CD4-positive, alpha-beta T cell (primary cell): ENCODE measurements at regions of chr18 and their contacts with region 1.

Region 1: GRCh38 chr18:3062798-3063680 is 50.1 kb upstream of the LPIN2 start:
- DNase-seq: peak; percentile 62 to 87 (median 74)
- ATAC-seq: peak; percentile 35
- H3K4me3 ChIP-seq: peak overlapping the region; percentile 54
- H3K4me3 Mint-ChIP-seq: peak overlapping the region; percentile 43
- H3K27ac ChIP-seq: peak overlapping the region; percentile 95 to 96
- H3K27ac Mint-ChIP-seq: peak overlapping the region; percentile 96
- H3K4me1 ChIP-seq: peaks cover 63% of the 10 kb centered on the region
- H3K4me1 Mint-ChIP-seq: peaks cover 72% of the 10 kb centered on the region
- H3K27me3 ChIP-seq: no peaks in the 10 kb centered on the region
- H3K27me3 Mint-ChIP-seq: no peaks in the 10 kb centered on the region
- CTCF ChIP-seq: peak; percentile 87

Region 2: DNA sequence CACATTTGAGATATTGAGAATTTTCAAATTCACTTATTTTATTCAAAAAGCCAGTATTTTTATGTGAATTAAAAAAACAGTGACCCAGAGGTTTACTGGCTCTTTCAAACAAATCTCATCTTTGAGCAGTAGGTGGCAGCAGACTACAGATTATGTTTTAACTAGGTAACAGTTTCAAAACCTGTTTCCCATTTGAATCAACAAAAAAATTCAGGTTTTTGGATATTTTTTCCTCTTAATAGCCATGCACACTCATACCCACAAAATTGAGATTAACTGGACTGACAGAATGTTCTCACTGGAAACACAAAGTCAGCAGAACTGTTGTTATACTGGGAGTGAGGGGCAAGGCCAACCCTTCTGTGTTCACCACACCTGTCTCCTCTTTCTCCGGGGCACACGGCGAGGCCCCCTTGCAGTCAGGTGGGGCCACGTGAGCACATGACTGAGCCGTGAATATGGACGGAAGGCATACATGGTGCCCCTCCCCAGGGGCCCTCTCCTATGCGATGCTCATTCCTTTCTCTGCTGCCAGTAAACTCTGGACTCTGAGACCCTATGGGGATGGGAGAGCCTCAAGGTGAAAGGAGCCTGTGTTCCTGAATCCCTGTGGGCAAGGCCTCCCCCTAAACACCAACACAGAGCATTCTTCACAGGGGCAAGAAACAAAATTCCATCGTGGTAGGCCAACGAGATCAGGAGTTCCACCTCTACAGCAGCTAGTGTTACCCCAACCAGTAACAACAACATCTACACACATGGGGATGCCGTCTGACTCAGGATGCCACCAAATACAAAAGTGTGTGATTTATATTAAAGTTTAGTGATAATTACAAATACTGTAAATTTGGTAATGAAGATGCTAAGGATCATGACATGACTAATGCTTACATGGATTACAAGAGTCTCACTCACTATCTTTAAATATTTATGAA is 130.5 kb before region 1 on chr18:
- CTCF ChIA-PET with region 1: interaction called, 8 read pairs
- POLR2A ChIA-PET with region 1: interaction called, 6 read pairs
- intact Hi-C with region 1: loop called in 1 of 2 experiments (anchors 5 kb)
- DNase-seq: peak in 8 of 14 experiments; percentile 13 to 84 (median 51)
- ATAC-seq: peak; percentile 80
- H3K4me3 ChIP-seq: no peak overlapping the region
- H3K4me3 Mint-ChIP-seq: no peak overlapping the region
- H3K27ac ChIP-seq: peak overlapping the region; percentile 18 to 51
- H3K27ac Mint-ChIP-seq: peak overlapping the region; percentile 67
- H3K4me1 ChIP-seq: peaks cover 9% of the 10 kb centered on the region
- H3K4me1 Mint-ChIP-seq: peaks cover 36% of the 10 kb centered on the region
- H3K27me3 ChIP-seq: no peaks in the 10 kb centered on the region
- H3K27me3 Mint-ChIP-seq: no peaks in the 10 kb centered on the region
- CTCF ChIP-seq: peak; percentile 92

Region 3: GRCh38 chr18:2971741-2972552 is 91.1 kb before region 1 on chr18:
- CTCF ChIA-PET with region 1: interaction called, 11 read pairs
- POLR2A ChIA-PET with region 1: interaction called, 10 read pairs
- intact Hi-C with region 1: no loop called
- DNase-seq: peak; percentile 42 to 91 (median 62)
- ATAC-seq: peak; percentile 73
- H3K4me3 ChIP-seq: peak overlapping the region; percentile 45
- H3K4me3 Mint-ChIP-seq: peak overlapping the region; percentile 92
- H3K27ac ChIP-seq: peak overlapping the region; percentile 81 to 89
- H3K27ac Mint-ChIP-seq: peak overlapping the region; percentile 96
- H3K4me1 ChIP-seq: peaks cover 79% of the 10 kb centered on the region
- H3K4me1 Mint-ChIP-seq: peaks cover 91% of the 10 kb centered on the region
- H3K27me3 ChIP-seq: no peaks in the 10 kb centered on the region
- H3K27me3 Mint-ChIP-seq: no peaks in the 10 kb centered on the region
- CTCF ChIP-seq: no peak

Region 4: DNA sequence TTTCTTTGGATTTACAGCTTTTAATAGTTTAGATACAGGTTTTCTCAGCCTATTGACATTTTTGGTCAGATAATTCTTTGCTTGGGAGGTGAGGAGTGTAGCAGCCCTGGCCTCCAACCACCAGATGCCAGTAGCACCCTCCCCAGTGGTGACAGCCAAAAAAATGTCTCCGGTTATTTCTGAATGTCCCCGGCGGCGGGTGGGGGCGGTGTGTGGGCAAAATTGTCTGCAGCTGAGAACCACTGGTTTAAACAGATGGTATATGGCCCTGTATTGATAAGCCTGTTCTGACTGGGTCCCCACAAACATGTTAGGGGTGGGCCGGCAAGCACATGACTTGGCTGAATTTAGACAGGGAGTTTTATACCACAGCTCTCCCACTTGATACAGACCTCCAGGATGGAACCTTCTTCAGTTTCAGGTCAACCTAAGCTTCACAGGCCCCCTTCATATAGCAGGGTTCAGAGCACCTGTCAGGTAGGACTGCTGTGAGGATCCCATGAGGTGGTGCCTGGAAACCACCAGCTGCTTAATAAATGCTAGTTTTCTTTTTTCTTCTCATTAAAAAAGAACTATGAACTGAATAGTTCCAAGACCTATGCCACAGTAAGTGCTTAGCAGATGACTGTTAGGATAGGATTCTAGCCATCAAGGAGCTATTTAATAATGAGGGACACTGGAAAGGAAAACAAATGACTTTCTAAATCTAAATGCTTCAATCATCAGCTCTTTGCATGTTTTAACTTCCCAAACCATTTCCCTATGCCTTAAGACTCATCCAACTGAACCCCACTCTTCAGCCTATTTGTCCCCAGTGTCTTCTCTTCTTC is 68.2 kb before region 1 on chr18:
- CTCF ChIA-PET with region 1: interaction called, 75 read pairs
- POLR2A ChIA-PET with region 1: interaction called, 59 read pairs
- intact Hi-C with region 1: loop called (anchors 1 kb)
- DNase-seq: peak; percentile 54 to 87 (median 68)
- ATAC-seq: peak; percentile 82
- H3K4me3 ChIP-seq: peak overlapping the region; percentile 24
- H3K4me3 Mint-ChIP-seq: peak overlapping the region; percentile 52
- H3K27ac ChIP-seq: no peak overlapping the region
- H3K27ac Mint-ChIP-seq: peak overlapping the region; percentile 61
- H3K4me1 ChIP-seq: peaks cover 61% of the 10 kb centered on the region
- H3K4me1 Mint-ChIP-seq: peaks cover 82% of the 10 kb centered on the region
- H3K27me3 ChIP-seq: no peaks in the 10 kb centered on the region
- H3K27me3 Mint-ChIP-seq: no peaks in the 10 kb centered on the region
- CTCF ChIP-seq: peak; percentile 75

Region 5: DNA sequence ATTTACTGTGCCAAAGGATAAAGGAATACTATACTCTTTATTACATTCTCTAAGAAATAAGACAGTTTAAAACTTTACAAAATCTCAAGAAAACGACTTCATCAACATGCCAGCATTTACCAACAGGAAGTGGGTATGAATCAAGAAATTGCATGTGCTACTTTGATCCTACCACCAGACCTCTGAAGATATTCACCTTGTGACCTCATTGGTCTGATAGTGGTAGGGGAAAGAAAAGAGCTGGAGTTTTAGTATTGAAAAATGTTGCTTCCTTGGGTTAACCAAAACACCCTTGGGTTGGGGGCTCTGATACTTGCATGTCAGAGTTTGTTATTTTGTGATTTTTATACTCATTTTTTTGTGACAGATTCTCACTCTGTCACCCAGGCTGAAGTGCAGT is 34.0 kb after region 1 on chr18:
- CTCF ChIA-PET with region 1: interaction called, 15 read pairs
- POLR2A ChIA-PET with region 1: interaction called, 28 read pairs
- intact Hi-C with region 1: loop called in 1 of 2 experiments (anchors 1 kb)
- DNase-seq: peak in 5 of 14 experiments; percentile 3 to 77 (median 70)
- ATAC-seq: peak; percentile 95
- H3K4me3 ChIP-seq: no peak overlapping the region
- H3K4me3 Mint-ChIP-seq: peak overlapping the region; percentile 5
- H3K27ac ChIP-seq: no peak overlapping the region
- H3K27ac Mint-ChIP-seq: peak overlapping the region; percentile 70
- H3K4me1 ChIP-seq: peaks cover 16% of the 10 kb centered on the region
- H3K4me1 Mint-ChIP-seq: peaks cover 40% of the 10 kb centered on the region
- H3K27me3 ChIP-seq: no peaks in the 10 kb centered on the region
- H3K27me3 Mint-ChIP-seq: no peaks in the 10 kb centered on the region
- CTCF ChIP-seq: no peak

Region 6: GRCh38 chr18:3245853-3246634 is 183.0 kb after region 1 on chr18:
- CTCF ChIA-PET with region 1: interaction called, 10 read pairs
- POLR2A ChIA-PET with region 1: interaction called, 73 read pairs
- intact Hi-C with region 1: loop called (anchors 5 kb)
- DNase-seq: peak; percentile 57 to 89 (median 70)
- ATAC-seq: peak; percentile 57
- H3K4me3 ChIP-seq: peak overlapping the region; percentile 84
- H3K4me3 Mint-ChIP-seq: peak overlapping the region; percentile 93
- H3K27ac ChIP-seq: peak overlapping the region; percentile 84 to 92
- H3K27ac Mint-ChIP-seq: peak overlapping the region; percentile 100
- H3K4me1 ChIP-seq: peaks cover 32% of the 10 kb centered on the region
- H3K4me1 Mint-ChIP-seq: peaks cover 29% of the 10 kb centered on the region
- H3K27me3 ChIP-seq: no peaks in the 10 kb centered on the region
- H3K27me3 Mint-ChIP-seq: no peaks in the 10 kb centered on the region
- CTCF ChIP-seq: peak; percentile 72